Right ventricle myocardium inferior (tissue), 1 donor: ENCODE measurements at regions of chr16 and their contacts with region 1.

Region 1: GRCh38 chr16:54817446-54817845 is 113.2 kb upstream of the IRX5 start:
- DNase-seq: no peak
- ATAC-seq: peak; percentile 66

Region 2: GRCh38 chr16:53773150-53773846 is 1044.1 kb before region 1 on chr16:
- intact Hi-C with region 1: loop called (anchors 10 kb)
- DNase-seq: no peak
- ATAC-seq: peak; percentile 76

Region 3: GRCh38 chr16:54489225-54490111 is 328.0 kb before region 1 on chr16:
- intact Hi-C with region 1: loop called (anchors 10 kb)
- DNase-seq: no peak
- ATAC-seq: peak; percentile 30